HepG2 (cell line): ENCODE measurements at regions of chr7 and their contacts with region 1.

Region 1: GRCh38 chr7:154304740-154305700 is 252.8 kb downstream of the DPP6 start:
- DNase-seq: no peak
- ATAC-seq: no peak
- H3K4me3 ChIP-seq: no peak overlapping the region
- H3K27ac ChIP-seq: no peak overlapping the region
- H3K4me1 ChIP-seq: peaks cover 17% of the 10 kb centered on the region
- H3K27me3 ChIP-seq: peaks cover 0 to 25% of the 10 kb centered on the region in 2 experiments; a peak in 3 of 5 replicates
- CTCF ChIP-seq: no peak
- EP300 ChIP-seq: no peak
- POLR2A ChIP-seq: no peak
- RAD21 ChIP-seq: no peak

Region 2: DNA sequence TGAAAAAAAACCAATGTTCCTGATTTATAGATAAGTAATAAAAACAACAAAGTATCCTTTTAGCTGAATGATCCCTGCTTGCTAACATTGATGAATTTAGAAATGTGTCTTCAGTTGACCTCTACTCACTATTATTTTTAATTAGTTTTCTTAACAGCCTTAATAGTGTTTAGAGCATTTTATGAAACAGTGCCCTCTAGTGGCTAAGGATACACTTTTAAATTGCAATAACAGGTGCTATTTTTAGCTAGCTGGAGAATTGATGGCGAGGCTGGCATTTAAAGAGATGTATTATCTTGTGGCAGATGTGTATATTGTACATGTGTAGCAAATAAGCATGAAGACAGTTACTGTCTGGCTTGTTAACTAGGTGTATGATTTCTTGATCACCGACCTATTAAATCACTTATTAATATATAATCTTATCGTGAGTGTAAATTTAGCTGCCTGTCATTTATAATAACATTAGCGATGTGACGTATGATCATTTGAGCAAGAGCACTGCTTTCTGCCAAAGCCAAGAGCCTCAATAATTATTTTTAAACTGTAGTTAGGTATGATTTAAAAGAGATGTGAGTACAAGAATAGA is 199.0 kb after region 1 on chr7:
- CTCF ChIA-PET with region 1: no interaction called
- POLR2A ChIA-PET with region 1: no interaction called
- in situ Hi-C with region 1: no loop called
- intact Hi-C with region 1: loop called (anchors 5 kb)
- DNase-seq: peak; percentile 19
- ATAC-seq: no peak
- H3K4me3 ChIP-seq: no peak overlapping the region
- H3K27ac ChIP-seq: no peak overlapping the region
- H3K4me1 ChIP-seq: no peaks in the 10 kb centered on the region
- H3K27me3 ChIP-seq: no peaks in the 10 kb centered on the region
- CTCF ChIP-seq: peak; percentile 58
- EP300 ChIP-seq: no peak
- POLR2A ChIP-seq: no peak
- RAD21 ChIP-seq: 0 out of 2 replicates have a peak, but pooled peaks have one; percentile 12